ENCODE measurements at regions of chr9 and their contacts with region 1.

Region 1: GRCh38 chr9:19379697-19380046 is 364 bp downstream of the RPS6 start:
- DNase-seq: no peak
- H3K4me3 ChIP-seq: peak overlapping the region; percentile 98
- H3K27ac ChIP-seq: peak overlapping the region; percentile 94
- H3K4me1 ChIP-seq: peaks cover 28% of the 10 kb centered on the region
- H3K27me3 ChIP-seq: no peaks in the 10 kb centered on the region
- CTCF ChIP-seq: no peak

Region 2: DNA sequence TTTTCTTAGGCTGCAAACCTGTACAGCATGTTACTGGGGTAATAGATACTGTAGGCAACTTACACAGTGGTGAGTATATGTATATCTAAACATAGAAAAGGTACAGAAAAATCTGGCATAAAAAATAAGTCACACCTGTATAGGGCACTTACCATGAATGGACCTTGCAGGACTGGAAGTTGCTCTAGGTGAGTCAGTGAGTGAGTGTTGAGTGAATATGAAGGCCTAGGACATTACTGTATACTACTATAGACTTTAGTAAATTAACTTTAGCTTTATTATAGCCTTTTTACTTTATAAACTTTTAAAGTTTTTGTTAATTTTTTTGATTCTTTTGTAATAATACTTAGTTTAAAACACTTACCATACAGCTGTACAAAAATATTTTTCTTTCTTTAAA is 97.9 kb before region 1 on chr9:
- CTCF ChIA-PET with region 1: no interaction called
- POLR2A ChIA-PET with region 1: no interaction called
- intact Hi-C with region 1: no loop called
- DNase-seq: no peak
- H3K4me3 ChIP-seq: no peak overlapping the region
- H3K27ac ChIP-seq: no peak overlapping the region
- H3K4me1 ChIP-seq: no peaks in the 10 kb centered on the region
- H3K27me3 ChIP-seq: no peaks in the 10 kb centered on the region
- CTCF ChIP-seq: no peak

Region 3: GRCh38 chr9:19408693-19409400 is 29.2 kb after region 1 on chr9 and contains the start of gene ACER2:
- CTCF ChIA-PET with region 1: no interaction called
- POLR2A ChIA-PET with region 1: no interaction called
- intact Hi-C with region 1: loop called (anchors 1 kb)
- DNase-seq: peak; percentile 78 to 93
- H3K4me3 ChIP-seq: peak within 1 kb of the TSS; percentile 83
- H3K27ac ChIP-seq: peak within 1 kb of the TSS; percentile 37; the same call in 1 of the 2 replicates
- H3K4me1 ChIP-seq: peaks cover 50% of the 10 kb centered on the region
- H3K27me3 ChIP-seq: no peaks in the 10 kb centered on the region
- CTCF ChIP-seq: no peak
- total RNA-seq, gene ACER2: 3.8 and 4.3 TPM in 2 replicates

Region 4: GRCh38 chr9:19451240-19452087 is 71.8 kb after region 1 on chr9:
- CTCF ChIA-PET with region 1: no interaction called
- POLR2A ChIA-PET with region 1: interaction called, 13 read pairs
- intact Hi-C with region 1: no loop called
- DNase-seq: no peak
- H3K4me3 ChIP-seq: no peak overlapping the region
- H3K27ac ChIP-seq: no peak overlapping the region
- H3K4me1 ChIP-seq: no peaks in the 10 kb centered on the region
- H3K27me3 ChIP-seq: no peaks in the 10 kb centered on the region
- CTCF ChIP-seq: no peak

Region 5: DNA sequence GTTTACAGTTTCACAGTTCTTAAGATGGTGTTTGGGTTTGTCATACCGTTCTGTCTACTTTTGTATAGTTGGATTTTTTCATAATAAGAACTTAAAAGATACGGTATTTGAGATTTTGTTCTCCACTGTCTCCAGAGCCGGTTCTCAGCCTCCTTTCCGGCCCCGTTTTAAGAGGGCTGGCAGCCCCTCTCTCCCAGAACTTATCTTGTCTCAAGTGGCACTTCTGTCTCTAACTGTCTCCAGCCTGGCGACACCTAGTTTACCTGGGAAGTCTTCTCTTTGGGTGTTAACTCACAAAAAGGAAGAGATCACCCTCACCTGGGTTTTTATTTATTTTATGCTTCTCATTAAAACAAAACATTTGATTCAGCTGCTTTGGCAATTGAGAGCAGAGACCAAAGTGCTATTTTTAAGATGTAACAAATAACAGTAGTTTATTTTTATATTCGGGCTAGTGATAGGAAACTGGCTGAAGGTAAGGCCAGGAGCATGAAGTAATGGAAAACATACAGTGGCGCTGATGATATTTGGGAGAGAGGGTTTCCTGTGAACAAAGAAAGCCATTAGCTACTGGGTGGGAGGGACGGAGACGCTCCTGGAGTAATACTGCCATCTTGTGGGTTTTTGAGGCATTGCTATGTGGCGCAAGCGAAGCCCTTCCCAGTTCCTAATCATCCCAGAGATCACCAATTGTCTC is 77.5 kb after region 1 on chr9:
- CTCF ChIA-PET with region 1: no interaction called
- POLR2A ChIA-PET with region 1: no interaction called
- intact Hi-C with region 1: loop called (anchors 1 kb)
- DNase-seq: peak; percentile 45 to 59
- H3K4me3 ChIP-seq: no peak overlapping the region
- H3K27ac ChIP-seq: no peak overlapping the region
- H3K4me1 ChIP-seq: no peaks in the 10 kb centered on the region
- H3K27me3 ChIP-seq: no peaks in the 10 kb centered on the region
- CTCF ChIP-seq: peak; percentile 83

Region 6: GRCh38 chr9:20054734-20055133 is 675.1 kb after region 1 on chr9:
- CTCF ChIA-PET with region 1: no interaction called
- POLR2A ChIA-PET with region 1: no interaction called
- intact Hi-C with region 1: no loop called
- DNase-seq: no peak
- H3K4me3 ChIP-seq: no peak overlapping the region
- H3K27ac ChIP-seq: no peak overlapping the region
- H3K4me1 ChIP-seq: no peaks in the 10 kb centered on the region
- H3K27me3 ChIP-seq: no peaks in the 10 kb centered on the region
- CTCF ChIP-seq: no peak

Measured in PC-9 (cell line).